ENCODE measurements at regions of chr1 and their contacts with region 1.

Region 1: GRCh38 chr1:20493839-20494608 is 8.0 kb upstream of the CAMK2N1 start:
- ATAC-seq: peak; percentile 74 to 93 (median 90)
- H3K4me3 ChIP-seq: no peak overlapping the region
- H3K27ac ChIP-seq: peak overlapping the region; percentile 38 to 61
- H3K4me1 ChIP-seq: peaks cover 11 to 13% of the 10 kb centered on the region in 2 donors

Region 2: DNA sequence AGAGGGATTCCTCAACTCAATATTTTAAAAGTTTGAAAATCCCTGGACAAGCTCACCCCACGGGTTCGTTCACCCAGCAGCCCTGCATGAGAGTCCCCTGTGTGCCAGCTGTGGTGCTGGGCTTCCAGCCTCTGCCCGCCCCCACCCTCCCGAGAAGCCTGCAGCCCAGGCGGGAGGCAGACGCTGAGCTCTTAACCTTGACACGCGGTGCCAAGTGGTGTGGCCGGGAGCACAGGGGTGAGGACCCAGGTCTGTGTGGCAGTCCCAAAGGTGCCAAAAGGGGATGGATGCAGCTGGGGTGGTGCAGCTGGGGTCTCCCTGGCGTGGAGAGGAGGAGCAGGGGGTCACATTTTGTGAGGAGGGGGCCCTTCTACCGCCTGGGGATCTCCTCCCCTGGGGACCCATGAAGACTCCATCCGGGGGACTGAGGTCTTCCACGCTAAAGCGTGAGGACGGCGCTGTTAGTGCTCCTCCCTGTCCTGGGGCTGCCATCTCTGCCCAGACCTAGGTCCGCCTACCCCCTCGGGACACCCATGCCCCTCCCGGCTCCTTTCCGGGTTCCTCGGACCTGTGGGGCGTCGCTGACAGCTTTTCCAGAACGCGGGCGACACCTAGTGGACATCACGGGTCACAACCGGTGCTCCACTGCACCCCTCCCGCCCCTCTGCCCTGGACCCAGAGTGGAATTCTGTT is 342.0 kb before region 1 on chr1:
- in situ Hi-C with region 1: loop called in 1 of 9 experiments (anchors 25 kb)
- ATAC-seq: peak; percentile 85 to 99 (median 92)
- H3K4me3 ChIP-seq: peak overlapping the region; percentile 11 to 25 (median 19)
- H3K27ac ChIP-seq: no peak overlapping the region
- H3K4me1 ChIP-seq: peaks cover 0 to 15% of the 10 kb centered on the region in 2 donors

Region 3: GRCh38 chr1:20212685-20213331 is 281.2 kb before region 1 on chr1:
- in situ Hi-C with region 1: loop called in 8 of 9 experiments (anchors 5 to 25 kb)
- ATAC-seq: peak; percentile 76 to 100 (median 98)
- H3K4me3 ChIP-seq: no peak overlapping the region
- H3K27ac ChIP-seq: peak overlapping the region in 1 of 2 donors; percentile 25
- H3K4me1 ChIP-seq: peaks cover 9 to 10% of the 10 kb centered on the region in 2 donors

Region 4: GRCh38 chr1:20233394-20233793 is 260.6 kb before region 1 on chr1:
- in situ Hi-C with region 1: loop called in 1 of 9 experiments (anchors 25 kb)
- ATAC-seq: peak; percentile 20 to 67 (median 37)
- H3K4me3 ChIP-seq: no peak overlapping the region
- H3K27ac ChIP-seq: peak overlapping the region in 1 of 2 donors; percentile 20
- H3K4me1 ChIP-seq: peaks cover 47 to 54% of the 10 kb centered on the region in 2 donors

Region 5: GRCh38 chr1:20361806-20362640 is 132.0 kb before region 1 on chr1:
- in situ Hi-C with region 1: loop called in 4 of 9 experiments (anchors 10 to 25 kb)
- ATAC-seq: peak; percentile 32 to 65 (median 58)
- H3K4me3 ChIP-seq: no peak overlapping the region
- H3K27ac ChIP-seq: no peak overlapping the region
- H3K4me1 ChIP-seq: peaks cover 37 to 41% of the 10 kb centered on the region in 2 donors